T-cell (primary cell): ENCODE measurements at regions of chr1 and their contacts with region 1.

Region 1: GRCh38 chr1:203038891-203039608 is 12.8 kb downstream of the PPFIA4 start:
- DNase-seq: peak in 32 of 35 experiments; percentile 21 to 78 (median 51)
- ATAC-seq: peak; percentile 73 to 93 (median 82)
- H3K4me3 ChIP-seq: no peak overlapping the region
- H3K4me3 Mint-ChIP-seq: no peak overlapping the region
- H3K27ac ChIP-seq: no peak overlapping the region
- H3K27ac Mint-ChIP-seq: no peak overlapping the region
- H3K4me1 ChIP-seq: peaks cover 0 to 3% of the 10 kb centered on the region in 2 experiments
- H3K4me1 Mint-ChIP-seq: peaks cover 0 to 6% (median 2%) of the 10 kb centered on the region in 3 donors
- H3K27me3 ChIP-seq: peaks cover 0 to 30% of the 10 kb centered on the region in 2 experiments
- H3K27me3 Mint-ChIP-seq: peaks cover 5 to 10% of the 10 kb centered on the region in 2 donors

Region 2: DNA sequence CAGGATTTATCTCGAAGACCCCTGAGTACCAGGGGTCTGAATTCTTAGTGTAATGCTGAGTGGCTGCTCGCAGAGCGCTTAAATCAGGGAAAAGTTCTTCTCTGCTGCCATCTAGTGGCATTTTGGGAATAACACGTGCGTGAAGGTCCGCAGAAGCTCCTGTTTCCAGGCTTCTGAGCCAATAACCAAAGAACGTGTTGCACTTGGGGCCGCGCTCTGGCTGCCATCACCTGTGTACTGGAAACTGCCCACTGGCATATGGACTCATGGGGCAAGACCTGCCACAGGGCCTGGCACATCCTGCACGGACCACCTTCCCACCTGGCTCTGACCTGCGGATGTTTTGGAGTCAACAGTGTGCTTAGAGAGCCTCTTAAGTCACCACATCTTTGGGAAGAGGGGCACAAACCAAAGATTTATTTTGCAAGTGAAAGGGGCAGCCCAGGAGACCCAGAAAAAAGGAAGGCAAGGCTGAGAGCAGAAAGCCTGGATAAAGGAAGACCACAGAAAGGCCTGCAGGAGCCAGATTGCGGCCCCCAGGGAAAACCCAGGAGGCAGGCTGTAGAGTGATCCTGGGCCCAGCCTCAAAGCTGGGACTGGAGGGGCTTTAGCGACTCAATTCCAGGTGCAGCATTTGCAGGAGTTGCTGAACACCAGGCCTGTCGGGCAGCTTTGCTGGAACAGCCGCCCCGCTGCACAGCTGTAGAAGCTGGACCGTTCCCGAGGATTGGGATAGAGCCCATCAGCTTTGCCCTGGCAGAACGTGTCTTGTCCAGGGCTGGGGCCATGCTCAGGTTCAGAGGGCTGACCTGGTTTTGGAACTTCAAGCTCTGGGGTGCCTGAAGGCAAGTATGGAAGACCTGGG is 177.5 kb after region 1 on chr1:
- CTCF ChIA-PET with region 1: interaction called, 7 to 17 read pairs
- POLR2A ChIA-PET with region 1: no interaction called
- DNase-seq: peak in 30 of 35 experiments; percentile 8 to 78 (median 36)
- ATAC-seq: peak; percentile 61 to 74 (median 69)
- H3K4me3 ChIP-seq: no peak overlapping the region
- H3K4me3 Mint-ChIP-seq: no peak overlapping the region
- H3K27ac ChIP-seq: no peak overlapping the region
- H3K27ac Mint-ChIP-seq: no peak overlapping the region
- H3K4me1 ChIP-seq: peaks cover 0 to 3% of the 10 kb centered on the region in 2 experiments
- H3K4me1 Mint-ChIP-seq: peaks cover 2 to 9% (median 3%) of the 10 kb centered on the region in 3 donors
- H3K27me3 ChIP-seq: peaks cover 0 to 35% of the 10 kb centered on the region in 2 experiments
- H3K27me3 Mint-ChIP-seq: peaks cover 15 to 17% of the 10 kb centered on the region in 2 donors